ENCODE measurements at regions of chr5 and their contacts with region 1.

Region 1: GRCh38 chr5:173615884-173616576 is 420 bp downstream of the BOD1 start:
- DNase-seq: peak; percentile 61 to 78 (median 66)
- ATAC-seq: peak; percentile 86
- H3K4me3 ChIP-seq: peak overlapping the region; percentile 95
- H3K27ac ChIP-seq: peak overlapping the region; percentile 46
- H3K4me1 ChIP-seq: peaks cover 4 to 9% of the 10 kb centered on the region in 2 experiments; a peak in 3 of 5 replicates
- H3K27me3 ChIP-seq: no peaks in the 10 kb centered on the region
- CTCF ChIP-seq: peak; percentile 74 to 75 (median 75)
- EP300 ChIP-seq: no peak
- POLR2A ChIP-seq: no peak
- RAD21 ChIP-seq: peak; percentile 10 to 29; a peak in 2 of 4 replicates

Region 2: DNA sequence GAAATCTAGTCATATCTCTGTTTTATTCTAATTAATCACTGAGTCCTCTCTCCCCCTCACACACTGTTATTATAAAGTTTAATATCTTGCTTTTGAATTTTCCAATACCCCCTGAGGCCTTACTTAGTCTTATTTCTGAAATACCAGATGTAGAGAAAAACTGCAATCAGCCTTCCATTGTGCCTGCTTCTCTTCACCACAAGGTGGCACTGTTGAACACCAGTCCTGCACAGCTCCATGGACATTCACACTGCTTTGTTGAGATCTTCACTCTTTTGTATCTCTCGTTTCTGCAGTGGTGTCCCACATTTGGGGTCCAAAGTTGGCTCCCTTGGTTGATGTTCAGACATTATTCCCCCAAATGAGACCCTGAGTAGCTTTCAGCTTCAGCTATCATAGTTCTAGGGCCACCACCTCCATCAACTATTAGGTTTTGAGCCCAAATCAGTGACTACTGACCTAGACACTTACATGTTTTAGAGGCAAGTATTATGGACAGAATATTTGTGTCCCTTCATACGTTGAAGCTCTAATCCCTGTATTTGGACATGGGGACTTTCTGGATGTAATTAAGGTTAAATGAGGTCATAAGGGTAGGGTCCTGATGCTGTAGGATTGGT is 23.9 kb before region 1 on chr5:
- CTCF ChIA-PET with region 1: no interaction called
- POLR2A ChIA-PET with region 1: no interaction called
- in situ Hi-C with region 1: no loop called
- intact Hi-C with region 1: loop called (anchors 1 kb)
- DNase-seq: peak; percentile 48 to 69 (median 50)
- ATAC-seq: peak; percentile 71
- H3K4me3 ChIP-seq: no peak overlapping the region
- H3K27ac ChIP-seq: no peak overlapping the region
- H3K4me1 ChIP-seq: no peaks in the 10 kb centered on the region
- H3K27me3 ChIP-seq: no peaks in the 10 kb centered on the region; a peak in 1 of 5 replicates
- CTCF ChIP-seq: peak; percentile 78 to 87 (median 84)
- EP300 ChIP-seq: no peak
- POLR2A ChIP-seq: no peak
- RAD21 ChIP-seq: peak; percentile 64 to 89

Region 3: DNA sequence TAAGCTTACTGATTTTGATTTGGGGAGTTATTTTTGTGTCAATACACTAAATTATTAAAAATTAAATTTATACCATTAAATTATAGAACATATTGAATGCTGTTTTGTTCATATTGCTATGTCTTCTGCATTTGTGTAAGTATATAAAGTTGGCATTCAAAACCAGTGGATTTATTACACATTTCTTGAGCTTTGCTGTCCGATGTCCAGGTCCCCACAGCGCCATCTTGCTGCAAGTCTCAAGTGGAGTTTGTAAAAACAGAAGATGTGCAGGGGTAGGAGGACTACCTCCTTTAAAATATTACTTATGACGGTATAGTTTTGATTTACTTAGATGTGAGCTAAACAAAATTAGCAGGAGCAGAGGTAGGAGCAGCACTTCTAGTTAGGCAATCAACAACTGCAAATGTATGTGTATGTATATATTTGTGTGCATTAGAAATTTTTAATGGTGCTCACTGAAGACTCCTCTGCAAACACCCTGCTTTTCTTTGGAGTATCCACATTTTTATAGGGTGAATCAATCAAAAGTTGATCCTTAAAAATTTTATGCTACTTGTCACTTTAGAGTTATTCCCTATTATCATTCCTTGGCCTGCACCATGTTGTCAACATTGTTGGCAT is 309.5 kb after region 1 on chr5:
- CTCF ChIA-PET with region 1: interaction called, 10 read pairs
- POLR2A ChIA-PET with region 1: no interaction called
- in situ Hi-C with region 1: no loop called
- intact Hi-C with region 1: no loop called
- DNase-seq: peak; percentile 33 to 69 (median 43)
- ATAC-seq: peak; percentile 76
- H3K4me3 ChIP-seq: no peak overlapping the region
- H3K27ac ChIP-seq: peak overlapping the region; percentile 17; the same call in 1 of the 3 replicates
- H3K4me1 ChIP-seq: peaks cover 5 to 24% of the 10 kb centered on the region in 2 experiments; a peak in 4 of 5 replicates
- H3K27me3 ChIP-seq: no peaks in the 10 kb centered on the region
- CTCF ChIP-seq: peak; percentile 66 to 71 (median 70)
- EP300 ChIP-seq: no peak
- POLR2A ChIP-seq: no peak
- RAD21 ChIP-seq: peak; percentile 51 to 69

Region 4: GRCh38 chr5:173972925-173973615 is 357.0 kb after region 1 on chr5:
- CTCF ChIA-PET with region 1: interaction called, 66 read pairs
- POLR2A ChIA-PET with region 1: no interaction called
- in situ Hi-C with region 1: loop called (anchors 5 kb)
- intact Hi-C with region 1: loop called (anchors 1 kb)
- DNase-seq: peak; percentile 81 to 89 (median 82)
- ATAC-seq: peak; percentile 82
- H3K4me3 ChIP-seq: peak overlapping the region; percentile 36
- H3K27ac ChIP-seq: no peak overlapping the region; the same call in 1 of the 3 replicates
- H3K4me1 ChIP-seq: peaks cover 28 to 39% of the 10 kb centered on the region in 2 experiments
- H3K27me3 ChIP-seq: peaks cover 0 to under 1% of the 10 kb centered on the region in 2 experiments; a peak in 1 of 5 replicates
- CTCF ChIP-seq: peak; percentile 81 to 91 (median 88)
- EP300 ChIP-seq: no peak
- POLR2A ChIP-seq: no peak
- RAD21 ChIP-seq: peak; percentile 79 to 93

Region 5: GRCh38 chr5:173984218-173984617 is 368.2 kb after region 1 on chr5:
- CTCF ChIA-PET with region 1: interaction called, 5 read pairs
- POLR2A ChIA-PET with region 1: interaction called, 4 read pairs
- in situ Hi-C with region 1: no loop called
- intact Hi-C with region 1: loop called (anchors 1 kb)
- DNase-seq: peak in 2 of 4 experiments; percentile 31 to 46
- ATAC-seq: peak; percentile 88
- H3K4me3 ChIP-seq: no peak overlapping the region
- H3K27ac ChIP-seq: no peak overlapping the region
- H3K4me1 ChIP-seq: peaks cover 0 to 2% of the 10 kb centered on the region in 2 experiments; a peak in 2 of 5 replicates
- H3K27me3 ChIP-seq: peaks cover 0 to 16% of the 10 kb centered on the region in 2 experiments; a peak in 3 of 5 replicates
- CTCF ChIP-seq: peak; percentile 64 to 69 (median 66)
- EP300 ChIP-seq: no peak
- POLR2A ChIP-seq: no peak
- RAD21 ChIP-seq: peak; percentile 35 to 86; a peak in 3 of 4 replicates

Region 6: DNA sequence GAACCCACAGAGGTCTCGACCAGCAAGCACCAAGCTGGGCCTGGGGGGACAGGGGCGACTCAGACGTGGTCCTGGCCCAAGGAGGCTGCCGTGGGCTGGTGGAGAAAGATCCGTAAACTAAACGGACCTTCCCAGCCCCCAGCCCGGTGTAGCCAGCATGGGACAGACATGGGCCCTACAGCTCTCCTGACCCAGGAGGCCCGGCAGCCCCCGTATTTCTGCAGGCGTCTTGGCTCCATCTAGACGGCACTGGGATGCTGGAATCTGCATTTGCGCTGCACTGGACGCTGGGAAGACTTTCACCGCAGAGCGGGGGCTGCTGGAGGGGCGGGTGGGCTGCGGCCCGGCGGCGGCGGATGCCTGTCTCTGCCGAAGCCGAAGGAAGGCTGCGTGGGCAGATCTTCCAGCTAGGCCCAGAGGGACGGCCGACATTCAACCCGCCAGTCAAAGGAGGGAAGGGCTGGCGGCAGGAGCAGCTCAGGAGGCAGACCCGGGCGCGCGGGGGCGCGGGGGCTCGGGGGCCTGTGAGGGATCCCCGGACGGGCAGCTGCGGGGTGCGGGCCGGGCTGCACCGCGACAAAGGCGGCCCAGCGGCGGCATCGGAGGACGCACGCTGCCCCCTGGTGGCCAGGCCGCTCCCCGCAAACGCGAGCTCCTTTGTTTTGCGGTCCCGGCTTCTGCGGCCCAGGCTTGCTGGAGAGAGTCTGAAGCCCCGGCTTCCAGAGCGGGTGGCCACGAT is 695.7 kb after region 1 on chr5:
- CTCF ChIA-PET with region 1: interaction called, 12 read pairs
- POLR2A ChIA-PET with region 1: no interaction called
- in situ Hi-C with region 1: loop called (anchors 10 kb)
- intact Hi-C with region 1: loop called (anchors 5 kb)
- DNase-seq: peak; percentile 65 to 83 (median 78)
- ATAC-seq: peak; percentile 98
- H3K4me3 ChIP-seq: no peak overlapping the region
- H3K27ac ChIP-seq: no peak overlapping the region
- H3K4me1 ChIP-seq: peaks cover 0 to 15% of the 10 kb centered on the region in 2 experiments; a peak in 2 of 5 replicates
- H3K27me3 ChIP-seq: peaks cover 15 to 82% of the 10 kb centered on the region in 2 experiments
- CTCF ChIP-seq: peak; percentile 59 to 83 (median 76)
- EP300 ChIP-seq: no peak
- POLR2A ChIP-seq: no peak
- RAD21 ChIP-seq: peak; percentile 84 to 88

Region 7: GRCh38 chr5:174317259-174317894 is 701.3 kb after region 1 on chr5:
- CTCF ChIA-PET with region 1: interaction called, 12 read pairs
- POLR2A ChIA-PET with region 1: no interaction called
- in situ Hi-C with region 1: loop called (anchors 10 kb)
- intact Hi-C with region 1: loop called (anchors 5 kb)
- DNase-seq: peak; percentile 42 to 52 (median 48)
- ATAC-seq: peak; percentile 89
- H3K4me3 ChIP-seq: no peak overlapping the region
- H3K27ac ChIP-seq: no peak overlapping the region
- H3K4me1 ChIP-seq: peaks cover 0 to under 1% of the 10 kb centered on the region in 2 experiments; a peak in 1 of 5 replicates
- H3K27me3 ChIP-seq: peaks cover 9 to 39% of the 10 kb centered on the region in 2 experiments; a peak in 4 of 5 replicates
- CTCF ChIP-seq: peak; percentile 70 to 76 (median 76)
- EP300 ChIP-seq: no peak
- POLR2A ChIP-seq: no peak
- RAD21 ChIP-seq: peak; percentile 77 to 86